ENCODE measurements at regions of chr18 and their contacts with region 1.

Region 1: DNA sequence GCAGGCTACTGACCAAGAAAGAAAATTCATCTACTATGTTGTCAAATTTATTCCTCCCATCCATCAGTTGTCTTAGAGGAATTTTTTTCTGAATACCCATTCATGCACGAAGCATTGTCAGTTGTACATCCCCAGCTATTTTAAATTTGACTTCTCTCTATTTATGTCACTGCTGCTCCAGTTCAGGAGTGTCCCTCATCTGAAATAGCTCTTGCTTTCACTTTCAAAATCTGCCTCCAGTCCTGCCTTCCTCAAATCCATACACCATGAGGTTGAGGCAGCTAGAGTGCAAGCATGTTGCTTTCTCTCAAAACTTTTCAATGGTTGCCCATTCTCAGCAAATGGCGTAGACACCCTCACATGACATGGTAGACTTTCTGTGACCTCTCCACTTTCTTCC is 335.4 kb upstream of the CDH2 start:
- DNase-seq: no peak
- ATAC-seq: no peak
- H3K4me3 Mint-ChIP-seq: no peak overlapping the region
- H3K27ac Mint-ChIP-seq: no peak overlapping the region
- H3K4me1 Mint-ChIP-seq: no peaks in the 10 kb centered on the region
- H3K27me3 Mint-ChIP-seq: no peaks in the 10 kb centered on the region
- CTCF ChIP-seq: no peak

Region 2: DNA sequence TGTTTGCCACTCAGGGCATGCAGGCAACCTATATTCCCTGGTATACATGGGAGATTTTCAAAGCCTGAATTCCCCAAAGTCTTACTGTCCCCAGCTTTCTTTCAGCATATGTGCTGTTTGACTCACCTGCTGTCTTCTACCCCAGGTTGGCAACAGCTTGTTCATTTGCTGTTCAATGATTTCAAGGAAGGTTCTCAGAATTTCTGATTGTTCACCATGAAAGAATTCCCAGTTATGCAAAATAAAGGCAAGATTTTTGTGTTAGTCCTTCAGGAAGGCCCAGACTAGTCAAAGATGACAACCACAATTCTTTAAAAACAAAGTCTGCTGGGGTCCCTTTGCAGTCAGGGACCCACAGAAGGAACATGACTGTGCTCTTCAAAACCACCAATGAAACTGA is 722.4 kb after region 1 on chr18:
- CTCF ChIA-PET with region 1: no interaction called
- POLR2A ChIA-PET with region 1: no interaction called
- intact Hi-C with region 1: loop called (anchors 5 kb)
- DNase-seq: no peak
- ATAC-seq: no peak
- H3K4me3 Mint-ChIP-seq: no peak overlapping the region
- H3K27ac Mint-ChIP-seq: no peak overlapping the region
- H3K4me1 Mint-ChIP-seq: no peaks in the 10 kb centered on the region
- H3K27me3 Mint-ChIP-seq: no peaks in the 10 kb centered on the region
- CTCF ChIP-seq: no peak

Measured in activated B cell treated with CpG ODN at 0.5 μM for 24 hours (primary cell).